ENCODE measurements at regions of chr14 and their contacts with region 1.

Region 1: DNA sequence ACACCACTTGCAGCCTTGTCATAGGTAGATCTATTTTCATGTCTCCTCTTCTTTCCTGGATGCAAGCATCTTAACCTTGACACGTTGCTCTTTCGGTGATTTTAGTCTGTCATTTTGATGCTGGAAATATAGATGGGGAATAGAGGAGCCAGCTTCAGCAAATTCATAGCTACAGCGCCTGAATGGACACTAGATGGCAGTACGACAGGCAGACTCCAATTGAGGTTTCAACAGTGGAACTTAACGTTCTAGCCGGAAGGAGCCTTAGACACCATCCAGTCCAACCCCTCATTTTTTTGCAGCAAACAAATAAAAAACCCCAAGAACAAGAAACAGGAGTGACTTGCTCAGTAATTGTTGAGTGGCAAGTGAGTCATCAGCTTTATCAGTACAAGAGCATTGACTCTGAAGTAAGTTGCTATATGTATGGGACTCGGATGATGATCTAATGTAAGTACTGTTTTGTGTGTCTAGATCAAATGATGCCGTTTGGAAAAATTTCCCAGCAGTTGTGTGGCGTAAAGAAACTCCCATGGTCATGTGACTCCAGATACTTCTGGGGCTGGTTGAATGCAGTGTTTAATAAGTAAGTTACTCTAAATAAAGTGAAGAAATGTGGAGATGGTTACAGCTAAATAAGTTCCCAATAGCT is 9.0 kb downstream of the DMAC2L start:
- DNase-seq: peak; percentile 77
- ATAC-seq: peak; percentile 98
- H3K4me3 Mint-ChIP-seq: no peak overlapping the region
- H3K27ac Mint-ChIP-seq: no peak overlapping the region
- H3K4me1 Mint-ChIP-seq: peaks cover 31% of the 10 kb centered on the region
- H3K27me3 Mint-ChIP-seq: no peaks in the 10 kb centered on the region

Region 2: DNA sequence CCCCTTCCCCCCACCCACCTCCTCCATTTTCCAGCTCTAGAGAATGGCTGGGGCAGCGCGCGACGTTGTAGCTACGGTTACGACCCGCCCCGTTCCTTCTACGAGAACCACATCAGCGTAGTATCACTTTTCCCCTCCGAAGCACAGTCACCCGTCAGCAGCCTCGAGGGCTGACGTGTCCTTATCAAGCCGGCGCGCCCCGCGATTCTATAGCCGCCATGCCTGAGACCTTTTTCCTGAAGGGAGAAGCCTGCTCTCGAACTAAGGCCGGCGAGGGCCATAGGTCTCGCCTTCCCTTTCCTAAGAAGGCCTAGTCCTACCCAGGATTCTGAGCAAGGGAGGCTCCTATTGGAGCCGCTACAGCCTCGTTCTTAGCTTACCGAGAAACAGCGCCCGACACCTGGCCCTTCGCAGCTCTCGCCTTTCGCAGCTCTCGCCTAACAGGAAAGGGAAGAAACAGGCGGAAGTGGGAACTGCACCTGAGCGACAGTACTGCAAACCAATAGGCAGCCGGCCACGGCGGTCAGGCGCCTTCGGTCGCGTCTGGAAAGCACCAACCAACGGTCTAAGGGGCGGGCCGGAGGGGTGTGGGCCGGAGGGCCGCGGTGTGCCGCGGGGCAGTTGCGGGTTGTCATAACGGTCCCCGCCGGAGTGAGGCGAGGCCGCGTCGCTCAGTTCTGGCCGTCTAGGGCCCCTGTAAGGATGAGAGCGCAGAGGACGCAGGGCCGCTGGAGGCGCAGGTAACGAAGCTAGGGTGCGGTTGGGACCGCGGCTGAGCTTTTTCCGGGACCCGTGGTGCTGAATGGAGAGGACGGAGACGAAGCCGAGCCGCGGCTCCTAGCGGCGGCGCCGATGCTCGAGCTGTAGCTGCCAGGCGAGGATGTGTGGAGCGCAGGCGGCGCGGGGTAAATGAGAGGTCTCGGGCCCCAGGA is 700.7 kb before region 1 on chr14 and contains the starts of genes MGAT2 and RPL36AL:
- CTCF ChIA-PET with region 1: no interaction called
- POLR2A ChIA-PET with region 1: no interaction called
- intact Hi-C with region 1: loop called in 1 of 2 experiments (anchors 1 kb)
- DNase-seq: peak; percentile 97
- ATAC-seq: peak; percentile 90
- H3K4me3 Mint-ChIP-seq: peak within 1 kb of the TSS; percentile 93
- H3K27ac Mint-ChIP-seq: peak within 1 kb of the TSS; percentile 97
- H3K4me1 Mint-ChIP-seq: peaks cover 51% of the 10 kb centered on the region
- H3K27me3 Mint-ChIP-seq: no peaks in the 10 kb centered on the region
- total RNA-seq, gene MGAT2: 23.8 to 32.2 TPM
- total RNA-seq, gene RPL36AL: 272 to 309 TPM

Region 3: DNA sequence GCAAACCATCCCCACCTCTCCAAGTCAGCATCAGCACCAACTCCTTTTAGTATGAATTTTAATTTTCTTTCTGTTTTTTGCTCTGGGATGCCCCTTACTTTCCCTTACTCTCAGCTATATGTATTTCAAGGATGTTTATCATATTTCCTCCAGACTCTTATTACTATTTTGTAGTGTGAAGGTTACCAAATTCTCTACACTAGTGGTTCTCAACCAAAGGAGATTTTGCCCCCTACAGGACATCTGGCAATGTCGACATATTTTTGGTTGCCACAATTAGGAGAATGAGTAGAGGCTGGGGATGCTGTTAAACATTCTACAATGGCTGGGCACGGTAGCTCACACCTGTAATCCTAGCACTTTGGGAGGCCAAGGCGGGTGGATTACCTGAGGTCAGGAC is 60.6 kb before region 1 on chr14:
- CTCF ChIA-PET with region 1: no interaction called
- POLR2A ChIA-PET with region 1: no interaction called
- intact Hi-C with region 1: no loop called
- DNase-seq: peak; percentile 27
- ATAC-seq: peak; percentile 64
- H3K4me3 Mint-ChIP-seq: no peak overlapping the region
- H3K27ac Mint-ChIP-seq: no peak overlapping the region
- H3K4me1 Mint-ChIP-seq: no peaks in the 10 kb centered on the region
- H3K27me3 Mint-ChIP-seq: no peaks in the 10 kb centered on the region

Region 4: GRCh38 chr14:50335389-50335788 is 14.3 kb after region 1 on chr14:
- CTCF ChIA-PET with region 1: interaction called, 19 read pairs
- POLR2A ChIA-PET with region 1: interaction called, 3 read pairs
- intact Hi-C with region 1: no loop called
- DNase-seq: no peak
- ATAC-seq: no peak
- H3K4me3 Mint-ChIP-seq: no peak overlapping the region
- H3K27ac Mint-ChIP-seq: no peak overlapping the region
- H3K4me1 Mint-ChIP-seq: peaks cover 12% of the 10 kb centered on the region
- H3K27me3 Mint-ChIP-seq: no peaks in the 10 kb centered on the region

Region 5: GRCh38 chr14:50396631-50397390 is 75.7 kb after region 1 on chr14 and contains the start of gene CDKL1:
- CTCF ChIA-PET with region 1: interaction called, 8 read pairs
- POLR2A ChIA-PET with region 1: no interaction called
- intact Hi-C with region 1: loop called (anchors 2 kb)
- DNase-seq: peak; percentile 70
- ATAC-seq: peak; percentile 75
- H3K4me3 Mint-ChIP-seq: peak within 1 kb of the TSS; percentile 82
- H3K27ac Mint-ChIP-seq: peak within 1 kb of the TSS; percentile 72
- H3K4me1 Mint-ChIP-seq: peaks cover 14% of the 10 kb centered on the region
- H3K27me3 Mint-ChIP-seq: peaks cover 6% of the 10 kb centered on the region
- total RNA-seq, gene CDKL1: 2.9 to 4.4 TPM

Region 6: GRCh38 chr14:50532502-50533240 is 211.5 kb after region 1 on chr14 and contains the start of gene MAP4K5:
- CTCF ChIA-PET with region 1: interaction called, 14 read pairs
- POLR2A ChIA-PET with region 1: no interaction called
- intact Hi-C with region 1: loop called (anchors 1 kb)
- DNase-seq: peak; percentile 94
- ATAC-seq: peak; percentile 96
- H3K4me3 Mint-ChIP-seq: peak within 1 kb of the TSS; percentile 90
- H3K27ac Mint-ChIP-seq: peak within 1 kb of the TSS; percentile 86
- H3K4me1 Mint-ChIP-seq: peaks cover 47% of the 10 kb centered on the region
- H3K27me3 Mint-ChIP-seq: no peaks in the 10 kb centered on the region
- total RNA-seq, gene MAP4K5: 19.1 to 31.2 TPM

Region 7: GRCh38 chr14:50773632-50774541 is 452.8 kb after region 1 on chr14:
- CTCF ChIA-PET with region 1: interaction called, 7 read pairs
- POLR2A ChIA-PET with region 1: no interaction called
- intact Hi-C with region 1: loop called (anchors 5 to 10 kb)
- DNase-seq: peak; percentile 60
- ATAC-seq: peak; percentile 68
- H3K4me3 Mint-ChIP-seq: no peak overlapping the region
- H3K27ac Mint-ChIP-seq: no peak overlapping the region
- H3K4me1 Mint-ChIP-seq: peaks cover 24% of the 10 kb centered on the region
- H3K27me3 Mint-ChIP-seq: no peaks in the 10 kb centered on the region